Right cardiac atrium (tissue), 5 donors: ENCODE measurements at regions of chr18 and their contacts with region 1.

Region 1: GRCh38 chr18:2104620-2105462 is 466.5 kb downstream of the METTL4 start:
- DNase-seq: peak; percentile 35 to 70 (median 62)
- ATAC-seq: peak; percentile 64 to 70
- H3K4me3 ChIP-seq: no peak overlapping the region
- H3K27ac ChIP-seq: no peak overlapping the region
- H3K4me1 ChIP-seq: no peaks in the 10 kb centered on the region
- H3K27me3 ChIP-seq: no peaks in the 10 kb centered on the region

Region 2: GRCh38 chr18:2223849-2224248 is 119.0 kb after region 1 on chr18:
- intact Hi-C with region 1: loop called in 2 of 4 experiments (anchors 10 kb)
- DNase-seq: peak in 2 of 3 donors; percentile 8 to 34
- ATAC-seq: peak in 1 of 2 donors; percentile 72
- H3K4me3 ChIP-seq: peak overlapping the region; percentile 36
- H3K27ac ChIP-seq: no peak overlapping the region
- H3K4me1 ChIP-seq: no peaks in the 10 kb centered on the region
- H3K27me3 ChIP-seq: no peaks in the 10 kb centered on the region

Region 3: DNA sequence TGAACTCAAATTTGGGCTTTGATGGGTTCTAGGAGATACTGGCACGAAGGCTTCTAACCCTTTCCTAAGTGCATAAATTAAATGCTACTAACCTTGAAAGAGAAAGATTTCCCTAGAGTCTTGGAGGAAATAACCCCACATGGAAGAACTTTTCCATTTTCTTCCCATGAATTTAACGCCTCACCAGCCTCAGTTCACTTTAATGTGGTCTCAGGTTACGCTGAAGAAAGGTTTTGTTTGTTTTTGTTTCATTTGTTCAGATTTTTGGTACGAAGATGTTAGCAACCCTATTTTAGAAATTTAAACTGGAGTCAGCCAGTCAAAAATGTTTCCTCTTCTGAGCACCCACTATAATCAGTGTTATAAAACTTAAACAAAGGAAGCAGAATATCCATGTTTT is 435.7 kb after region 1 on chr18:
- intact Hi-C with region 1: loop called in 2 of 4 experiments (anchors 5 to 10 kb)
- DNase-seq: no peak
- ATAC-seq: no peak
- H3K4me3 ChIP-seq: no peak overlapping the region
- H3K27ac ChIP-seq: no peak overlapping the region
- H3K4me1 ChIP-seq: no peaks in the 10 kb centered on the region
- H3K27me3 ChIP-seq: no peaks in the 10 kb centered on the region